Activated T-helper 2 cell treated with anti-CD3 and anti-CD28 coated beads, Interferon-gamma antibody, Interleukin-2, Interleukin-4, amounts not matched to agents 10 μg/mL and 5 μg/mL and 100 μg/mL, durations not matched to agents 14 hours and 24 hours and 36 hours (primary cell): ENCODE measurements at regions of chr17 and their contacts with region 1.

Region 1: GRCh38 chr17:8745586-8746500 is 1.2 kb upstream of the CCDC42 start:
- DNase-seq: peak; percentile 61
- H3K4me3 Mint-ChIP-seq: peak overlapping the region; percentile 84
- H3K27ac Mint-ChIP-seq: peak overlapping the region; percentile 67
- H3K4me1 Mint-ChIP-seq: peaks cover 13% of the 10 kb centered on the region
- H3K27me3 Mint-ChIP-seq: peaks cover 14% of the 10 kb centered on the region

Region 2: DNA sequence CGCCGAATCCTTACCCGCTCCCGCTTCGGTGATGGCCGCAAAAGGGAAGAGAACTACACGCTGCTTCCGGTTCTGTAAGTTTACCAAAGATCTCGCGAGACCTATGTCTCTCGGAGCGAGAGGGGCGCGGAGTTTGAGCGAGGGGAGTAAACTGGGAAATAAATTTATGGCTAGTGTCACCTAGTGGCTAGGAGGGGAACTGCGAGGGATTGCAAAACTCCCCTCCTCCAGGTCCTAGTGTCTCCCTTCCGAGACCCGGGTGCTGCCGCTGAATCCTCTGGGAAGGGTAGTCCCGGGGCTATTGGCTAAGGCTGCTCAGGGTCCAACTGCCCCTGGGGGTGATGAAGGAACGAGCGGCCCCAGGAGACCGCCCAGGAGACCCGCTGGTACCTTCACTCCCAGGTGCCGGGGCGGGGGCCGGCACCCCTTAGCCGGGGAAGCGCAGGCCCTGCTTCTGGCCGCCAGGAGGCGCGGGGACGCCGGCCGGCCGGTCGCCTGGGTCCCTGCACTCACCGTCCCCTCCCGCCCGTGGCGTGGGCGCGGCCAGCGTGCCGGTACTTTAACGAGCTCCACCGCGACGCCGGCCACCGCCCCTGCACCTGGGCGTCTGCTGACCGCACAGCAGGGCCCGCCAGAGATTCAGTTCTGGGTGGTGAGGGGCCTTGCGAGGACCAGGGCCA is 362.6 kb before region 1 on chr17 and contains the start of gene RPL26:
- intact Hi-C with region 1: loop called (anchors 2 kb)
- DNase-seq: peak; percentile 94
- H3K4me3 Mint-ChIP-seq: peak within 1 kb of the TSS; percentile 99
- H3K27ac Mint-ChIP-seq: peak within 1 kb of the TSS; percentile 96
- H3K4me1 Mint-ChIP-seq: peaks cover 33% of the 10 kb centered on the region
- H3K27me3 Mint-ChIP-seq: no peaks in the 10 kb centered on the region
- total RNA-seq, gene RPL26: 2,352 and 2,379 TPM in 2 replicates

Region 3: GRCh38 chr17:8409966-8410864 is 335.6 kb before region 1 on chr17:
- intact Hi-C with region 1: loop called (anchors 1 kb)
- DNase-seq: peak; percentile 66
- H3K4me3 Mint-ChIP-seq: no peak overlapping the region
- H3K27ac Mint-ChIP-seq: no peak overlapping the region
- H3K4me1 Mint-ChIP-seq: peaks cover 21% of the 10 kb centered on the region
- H3K27me3 Mint-ChIP-seq: peaks cover 34% of the 10 kb centered on the region

Region 4: DNA sequence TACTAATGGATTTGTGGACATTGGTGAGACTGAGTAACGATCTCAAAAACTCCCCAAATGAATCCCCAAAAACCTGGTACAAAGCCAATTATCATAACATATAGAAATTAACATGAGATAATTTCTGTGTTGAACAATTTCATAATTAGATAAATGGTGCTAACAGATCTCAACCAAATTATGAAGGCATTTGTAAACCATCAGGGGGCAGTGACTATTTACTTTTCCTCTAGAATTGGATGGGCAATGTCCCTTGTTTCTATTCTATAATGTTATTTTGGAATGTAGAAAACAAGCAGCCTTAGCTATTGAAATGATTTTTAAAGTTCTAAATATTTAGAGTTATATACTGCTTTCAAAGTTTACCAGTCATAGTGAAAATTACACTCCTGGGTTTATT is 173.1 kb before region 1 on chr17:
- intact Hi-C with region 1: loop called (anchors 5 kb)
- DNase-seq: no peak
- H3K4me3 Mint-ChIP-seq: no peak overlapping the region
- H3K27ac Mint-ChIP-seq: no peak overlapping the region
- H3K4me1 Mint-ChIP-seq: peaks cover 1% of the 10 kb centered on the region
- H3K27me3 Mint-ChIP-seq: peaks cover 2% of the 10 kb centered on the region

Region 5: DNA sequence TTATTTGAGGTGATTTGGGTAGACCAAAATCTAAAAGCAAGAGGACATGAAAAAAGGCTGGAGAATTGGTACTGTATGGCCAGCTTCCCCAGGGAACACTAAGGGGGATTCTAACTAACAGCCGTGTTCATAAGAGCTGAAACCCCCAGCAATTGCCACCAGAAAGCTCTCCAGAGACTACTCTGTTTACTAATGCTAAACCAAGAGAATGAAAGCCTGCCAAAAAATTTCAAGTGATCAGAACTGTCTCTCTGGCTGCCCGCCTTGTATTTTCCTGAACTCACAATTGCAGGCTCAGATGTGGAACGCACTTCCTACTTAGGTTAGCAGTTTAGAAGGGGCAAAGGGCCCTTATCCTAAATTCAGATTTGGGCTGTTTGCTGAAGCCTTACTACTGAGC is 139.4 kb before region 1 on chr17:
- intact Hi-C with region 1: no loop called
- DNase-seq: no peak
- H3K4me3 Mint-ChIP-seq: no peak overlapping the region
- H3K27ac Mint-ChIP-seq: no peak overlapping the region
- H3K4me1 Mint-ChIP-seq: no peaks in the 10 kb centered on the region
- H3K27me3 Mint-ChIP-seq: peaks cover 16% of the 10 kb centered on the region

Region 6: DNA sequence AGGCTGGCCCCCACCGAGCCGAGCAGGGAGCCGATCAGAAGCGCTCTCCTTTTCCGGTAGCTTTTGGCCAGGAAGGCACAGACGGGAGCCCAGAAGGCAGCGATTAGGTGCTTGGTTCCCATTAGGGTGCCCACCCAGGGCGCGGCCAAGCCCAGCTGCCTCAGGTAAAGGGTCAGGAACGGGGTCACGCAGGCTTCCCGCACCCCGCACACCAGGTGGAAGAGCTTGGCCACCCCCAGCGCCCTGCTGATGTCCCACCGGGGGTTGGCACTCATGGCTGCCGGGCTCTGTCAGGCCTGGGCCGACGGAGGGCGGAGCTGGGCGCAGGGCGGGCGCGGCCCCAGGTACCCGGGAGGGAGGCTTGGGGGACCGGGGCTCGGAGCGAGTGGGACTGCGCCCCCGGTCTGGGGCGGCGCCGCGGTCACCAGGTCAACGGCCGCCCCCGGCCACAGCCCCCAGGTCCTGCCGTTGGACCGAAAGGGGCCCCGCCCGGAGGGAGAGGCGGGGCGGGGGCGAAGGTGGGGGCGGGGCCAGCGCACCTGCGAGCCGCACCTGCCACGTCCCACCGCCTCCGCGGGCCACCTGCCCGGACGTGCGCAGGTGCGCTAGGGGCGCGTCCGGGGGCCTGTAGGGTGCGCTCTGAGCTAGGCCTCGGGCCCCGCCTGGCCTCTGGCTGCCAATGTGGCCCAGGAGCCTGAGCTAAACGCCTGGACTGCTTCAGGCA is 53.2 kb after region 1 on chr17 and contains the start of gene MFSD6L:
- intact Hi-C with region 1: no loop called
- DNase-seq: no peak
- H3K4me3 Mint-ChIP-seq: no peak within 1 kb of the TSS
- H3K27ac Mint-ChIP-seq: no peak within 1 kb of the TSS
- H3K4me1 Mint-ChIP-seq: no peaks in the 10 kb centered on the region
- H3K27me3 Mint-ChIP-seq: no peaks in the 10 kb centered on the region
- total RNA-seq, gene MFSD6L: 0.64 and 0.94 TPM in 2 replicates

Region 7: GRCh38 chr17:8857919-8858318 is 112.1 kb after region 1 on chr17:
- intact Hi-C with region 1: loop called (anchors 10 kb)
- DNase-seq: peak; percentile 55
- H3K4me3 Mint-ChIP-seq: peak overlapping the region; percentile 75
- H3K27ac Mint-ChIP-seq: peak overlapping the region; percentile 95
- H3K4me1 Mint-ChIP-seq: peaks cover 58% of the 10 kb centered on the region
- H3K27me3 Mint-ChIP-seq: no peaks in the 10 kb centered on the region

Region 8: DNA sequence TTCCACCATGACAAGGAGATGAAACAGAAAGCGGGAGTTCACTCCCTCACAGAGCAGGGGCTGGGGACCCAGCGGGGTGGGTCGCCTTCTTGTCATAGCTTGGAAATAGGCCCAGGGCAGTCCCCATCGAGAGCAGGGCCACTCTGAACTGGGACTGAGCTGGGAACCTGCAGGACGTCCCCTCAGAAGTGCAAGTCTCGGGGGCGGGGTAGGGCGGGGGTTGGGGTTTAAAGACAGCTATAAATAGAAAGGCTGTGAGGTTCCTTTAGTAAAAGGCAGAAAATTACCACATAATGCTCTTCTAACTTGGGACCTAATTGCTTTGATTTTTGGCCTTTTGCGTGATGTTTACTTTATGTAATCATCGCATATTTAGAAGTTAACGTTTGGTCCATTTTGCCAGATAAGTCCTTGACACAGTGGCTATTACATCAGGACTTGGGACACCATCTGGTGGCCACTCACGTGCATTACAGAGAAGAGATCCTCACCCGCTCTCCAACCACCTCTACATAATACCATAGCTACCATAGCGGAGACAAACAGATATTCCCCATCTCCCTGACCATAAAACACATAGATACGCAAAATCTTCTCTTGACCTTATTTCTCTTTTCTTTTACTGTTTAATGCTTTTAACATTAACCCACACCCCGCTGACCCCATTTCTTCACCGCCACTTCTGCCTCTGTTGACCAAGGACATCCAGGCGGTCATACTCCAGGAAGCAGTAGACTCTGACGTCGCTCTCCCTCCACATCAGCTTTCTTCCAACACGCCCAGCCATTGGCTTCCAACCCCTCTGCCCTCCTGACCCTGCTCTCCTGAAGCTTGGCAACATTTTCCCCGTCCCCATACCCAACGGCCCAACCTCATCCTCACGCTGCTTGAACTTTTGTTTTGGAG is 149.1 kb after region 1 on chr17:
- intact Hi-C with region 1: loop called (anchors 10 kb)
- DNase-seq: no peak
- H3K4me3 Mint-ChIP-seq: no peak overlapping the region
- H3K27ac Mint-ChIP-seq: peak overlapping the region; percentile 34
- H3K4me1 Mint-ChIP-seq: peaks cover 62% of the 10 kb centered on the region
- H3K27me3 Mint-ChIP-seq: no peaks in the 10 kb centered on the region

Region 9: GRCh38 chr17:8991514-8992285 is 245.9 kb after region 1 on chr17:
- intact Hi-C with region 1: loop called (anchors 10 kb)
- DNase-seq: peak; percentile 31
- H3K4me3 Mint-ChIP-seq: no peak overlapping the region
- H3K27ac Mint-ChIP-seq: no peak overlapping the region
- H3K4me1 Mint-ChIP-seq: peaks cover 6% of the 10 kb centered on the region
- H3K27me3 Mint-ChIP-seq: peaks cover 6% of the 10 kb centered on the region